ENCODE measurements at regions of chr1 and their contacts with region 1.

Region 1: DNA sequence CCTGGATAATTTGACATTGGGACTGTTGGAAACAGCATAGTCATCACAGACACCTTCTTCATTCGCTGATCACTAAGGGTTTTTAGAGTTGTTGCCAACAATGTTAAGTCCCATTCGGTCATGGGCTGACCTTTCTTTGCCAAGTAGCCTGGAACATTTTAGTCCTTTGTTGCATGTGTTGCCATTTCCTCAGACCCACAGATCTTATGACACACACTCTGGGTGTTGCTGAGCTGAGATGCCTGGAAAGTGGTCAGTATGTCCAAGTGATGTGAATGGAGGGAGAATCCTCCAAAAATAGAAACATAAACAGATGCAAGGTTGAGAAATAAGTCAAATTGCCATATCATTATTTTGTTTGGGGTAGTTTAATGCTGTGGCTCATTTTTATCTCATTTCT is 61.5 kb upstream of the GJA5 start:
- DNase-seq: peak; percentile 32
- ATAC-seq: peak; percentile 94 to 96

Region 2: DNA sequence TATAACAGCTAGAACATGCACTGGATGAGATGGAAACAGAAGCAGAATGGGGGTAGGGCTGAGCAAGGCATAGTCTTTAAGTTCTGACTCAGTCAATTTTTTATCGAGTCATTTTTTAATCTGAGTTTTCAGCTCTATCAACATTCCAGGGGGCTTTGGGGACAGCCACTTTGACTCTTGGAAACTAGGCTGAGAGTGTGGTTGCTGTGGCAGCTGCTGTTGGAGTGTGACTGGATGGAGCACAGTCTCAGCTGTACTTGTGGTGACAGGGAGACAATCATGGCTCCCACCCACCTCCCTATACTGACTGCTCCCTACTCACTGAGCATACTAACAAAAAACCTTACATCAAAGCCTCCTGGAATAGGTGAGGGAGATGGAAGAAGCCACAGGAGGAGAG is 86.5 kb before region 1 on chr1:
- intact Hi-C with region 1: loop called in 1 of 2 experiments (anchors 5 kb)
- DNase-seq: no peak
- ATAC-seq: peak; percentile 86 to 87

Measured in left cardiac atrium (tissue), 4 donors.